ENCODE measurements at regions of chr9 and their contacts with region 1.

Region 1: GRCh38 chr9:22169727-22170503 is 160.8 kb upstream of the CDKN2B start:
- DNase-seq: no peak
- ATAC-seq: no peak
- H3K4me3 ChIP-seq: no peak overlapping the region
- H3K27ac ChIP-seq: peak overlapping the region in 1 of 12 donors; percentile 63
- H3K4me1 ChIP-seq: peaks cover 0 to 21% (median 0%) of the 10 kb centered on the region in 12 donors
- H3K27me3 ChIP-seq: no peaks in the 10 kb centered on the region
- CTCF ChIP-seq: no peak
- POLR2A ChIP-seq: no peak

Region 2: DNA sequence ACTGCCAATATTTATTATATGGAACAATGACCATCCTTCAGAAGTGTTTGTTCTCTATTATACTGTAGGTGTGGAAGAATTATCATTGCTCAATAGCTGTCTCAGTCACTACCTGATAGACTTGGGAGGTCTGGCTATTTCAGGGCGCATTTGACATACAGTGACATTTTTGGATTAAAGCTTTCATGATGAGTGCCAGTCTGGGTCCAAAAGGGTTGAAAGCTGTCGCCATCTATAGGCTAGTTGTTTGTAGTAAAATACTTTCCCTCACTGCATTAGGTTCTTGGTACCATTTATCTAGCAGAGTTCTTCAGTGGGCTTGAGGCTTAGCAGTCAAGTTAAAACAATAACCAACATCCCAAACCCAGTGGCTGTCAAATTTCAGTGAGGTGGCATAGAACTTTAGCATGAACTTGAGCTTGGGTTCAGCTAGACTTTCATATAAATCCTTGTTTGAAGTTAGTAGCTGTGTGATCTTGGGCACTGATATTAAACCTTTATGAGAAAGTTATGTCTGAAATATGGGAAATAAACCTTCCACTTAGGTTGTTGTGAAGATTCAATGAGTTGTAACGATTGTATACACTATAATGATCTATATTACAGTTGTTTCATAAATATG is 50.3 kb before region 1 on chr9:
- intact Hi-C with region 1: loop called in 1 of 10 experiments (anchors 10 kb)
- DNase-seq: peak in 1 of 5 donors; percentile 7
- ATAC-seq: peak in 3 of 4 donors; percentile 63 to 79 (median 79)
- H3K4me3 ChIP-seq: no peak overlapping the region
- H3K27ac ChIP-seq: no peak overlapping the region
- H3K4me1 ChIP-seq: peaks cover 0 to 5% (median 0%) of the 10 kb centered on the region in 12 donors
- H3K27me3 ChIP-seq: peaks cover 0 to 3% (median 0%) of the 10 kb centered on the region in 9 donors
- CTCF ChIP-seq: peak; percentile 13 to 52 (median 31)
- POLR2A ChIP-seq: no peak

Region 3: GRCh38 chr9:22158927-22159346 is 11.0 kb before region 1 on chr9:
- intact Hi-C with region 1: no loop called
- DNase-seq: peak in 4 of 5 donors; percentile 14 to 54 (median 32)
- ATAC-seq: peak; percentile 64 to 88 (median 82)
- H3K4me3 ChIP-seq: no peak overlapping the region
- H3K27ac ChIP-seq: peak overlapping the region in 2 of 12 donors; percentile 36 to 59
- H3K4me1 ChIP-seq: peaks cover 0 to 30% (median 13%) of the 10 kb centered on the region in 12 donors
- H3K27me3 ChIP-seq: no peaks in the 10 kb centered on the region
- CTCF ChIP-seq: no peak
- POLR2A ChIP-seq: no peak

Region 4: DNA sequence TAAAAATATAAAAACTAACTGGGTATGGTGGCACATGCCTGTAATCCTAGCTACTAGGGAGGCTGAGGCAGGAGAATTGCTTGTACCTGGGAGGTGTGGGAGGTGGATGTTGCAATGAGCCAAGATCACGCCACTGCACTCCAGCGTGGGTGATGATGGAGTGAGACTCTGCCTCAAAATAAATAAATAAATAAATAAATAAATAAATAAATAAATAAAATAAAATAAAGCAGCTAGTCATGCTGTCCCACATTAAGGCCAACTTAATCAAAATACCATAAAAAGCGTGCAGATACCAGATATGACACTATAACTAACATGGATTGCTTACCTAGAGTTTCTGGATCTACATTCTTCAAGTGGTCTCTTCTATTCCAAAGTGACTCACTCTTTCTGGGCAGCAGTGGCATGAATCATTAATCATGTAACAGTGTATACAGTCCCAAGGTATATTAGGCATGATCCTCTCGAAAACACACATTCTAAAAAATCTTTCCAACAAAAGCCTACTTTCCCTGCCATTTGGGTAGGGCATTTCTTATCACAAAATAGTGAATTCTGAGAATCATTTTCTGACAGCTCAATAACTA is 1469.0 kb after region 1 on chr9:
- intact Hi-C with region 1: no loop called
- DNase-seq: no peak
- ATAC-seq: no peak
- H3K4me3 ChIP-seq: no peak overlapping the region
- H3K27ac ChIP-seq: no peak overlapping the region
- H3K4me1 ChIP-seq: no peaks in the 10 kb centered on the region
- H3K27me3 ChIP-seq: no peaks in the 10 kb centered on the region
- CTCF ChIP-seq: no peak
- POLR2A ChIP-seq: no peak